Naive thymus-derived CD4-positive, alpha-beta T cell (primary cell): ENCODE measurements at regions of chr1 and their contacts with region 1.

Region 1: GRCh38 chr1:27725374-27726173 is at the start of gene FAM76A:
- DNase-seq: peak; percentile 97 to 100 (median 99)
- ATAC-seq: peak; percentile 97
- H3K4me3 ChIP-seq: peak within 1 kb of the TSS; percentile 77
- H3K4me3 Mint-ChIP-seq: peak within 1 kb of the TSS; percentile 86 to 93 (median 90)
- H3K27ac ChIP-seq: peak within 1 kb of the TSS; percentile 91
- H3K27ac Mint-ChIP-seq: peak within 1 kb of the TSS; percentile 93 to 100 (median 98)
- H3K4me1 ChIP-seq: peaks cover 7 to 17% of the 10 kb centered on the region in 2 donors
- H3K4me1 Mint-ChIP-seq: peaks cover 9 to 35% (median 28%) of the 10 kb centered on the region in 7 donors
- H3K27me3 ChIP-seq: no peaks in the 10 kb centered on the region
- H3K27me3 Mint-ChIP-seq: no peaks in the 10 kb centered on the region
- total RNA-seq, gene FAM76A: 15.2 to 25.2 (median 22.2) TPM

Region 2: DNA sequence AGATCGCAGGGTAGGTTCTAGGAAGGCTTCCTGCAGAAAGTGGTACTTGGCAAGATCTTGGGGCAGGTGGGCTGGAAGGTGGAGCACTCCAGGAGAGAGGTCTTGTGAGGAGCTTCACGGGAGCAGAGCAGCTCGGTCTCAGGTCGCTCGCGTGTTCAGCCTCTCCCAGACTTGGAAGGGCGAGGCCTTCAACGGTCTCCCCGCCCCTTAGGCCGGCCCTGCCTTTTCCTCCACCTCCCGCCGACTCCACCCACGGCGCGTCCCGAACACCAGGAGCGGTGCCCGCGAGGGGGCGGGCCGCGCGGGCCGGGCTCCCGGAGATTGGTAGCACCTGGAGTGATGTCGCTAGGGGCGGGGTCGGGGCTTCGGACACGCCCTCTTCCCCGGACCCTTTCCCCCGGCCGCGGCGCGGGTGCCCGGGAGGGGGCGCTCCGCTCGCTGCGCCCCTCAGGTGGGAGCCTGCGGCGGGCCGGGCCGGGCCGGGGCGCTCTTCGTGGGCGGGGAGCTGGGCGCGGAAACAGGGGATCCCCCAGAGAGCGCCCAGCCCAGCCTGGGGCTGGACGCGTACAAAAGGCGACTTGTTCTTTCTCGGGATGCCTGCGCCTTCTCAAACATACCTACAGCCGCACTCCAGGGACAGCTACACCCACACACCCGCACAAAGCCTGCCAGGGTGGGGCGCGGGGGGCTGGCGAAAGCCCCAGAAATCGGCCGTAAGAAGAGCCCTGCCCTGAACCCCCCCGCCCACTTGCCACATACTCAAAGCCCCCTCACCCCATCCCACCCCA is 157.1 kb before region 1 on chr1:
- CTCF ChIA-PET with region 1: no interaction called
- POLR2A ChIA-PET with region 1: no interaction called
- intact Hi-C with region 1: loop called in 1 of 2 experiments (anchors 2 kb)
- DNase-seq: peak; percentile 87 to 96 (median 91)
- ATAC-seq: peak; percentile 96
- H3K4me3 ChIP-seq: peak overlapping the region; percentile 51
- H3K4me3 Mint-ChIP-seq: peak overlapping the region; percentile 55 to 88 (median 78)
- H3K27ac ChIP-seq: peak overlapping the region; percentile 68
- H3K27ac Mint-ChIP-seq: peak overlapping the region; percentile 64 to 93 (median 83)
- H3K4me1 ChIP-seq: peaks cover 7 to 19% of the 10 kb centered on the region in 2 donors
- H3K4me1 Mint-ChIP-seq: peaks cover 15 to 57% (median 51%) of the 10 kb centered on the region in 7 donors
- H3K27me3 ChIP-seq: no peaks in the 10 kb centered on the region
- H3K27me3 Mint-ChIP-seq: no peaks in the 10 kb centered on the region

Region 3: GRCh38 chr1:27772933-27773825 is 47.6 kb after region 1 on chr1 and contains the start of gene STX12:
- CTCF ChIA-PET with region 1: interaction called, 3 read pairs
- POLR2A ChIA-PET with region 1: interaction called, 13 read pairs
- intact Hi-C with region 1: loop called (anchors 1 kb)
- DNase-seq: peak; percentile 97 to 100 (median 98)
- ATAC-seq: peak; percentile 96
- H3K4me3 ChIP-seq: peak within 1 kb of the TSS; percentile 97
- H3K4me3 Mint-ChIP-seq: peak within 1 kb of the TSS; percentile 84 to 97 (median 94)
- H3K27ac ChIP-seq: peak within 1 kb of the TSS; percentile 94
- H3K27ac Mint-ChIP-seq: peak within 1 kb of the TSS; percentile 90 to 99 (median 96)
- H3K4me1 ChIP-seq: peaks cover 10 to 13% of the 10 kb centered on the region in 2 donors
- H3K4me1 Mint-ChIP-seq: peaks cover 26 to 43% (median 37%) of the 10 kb centered on the region in 7 donors
- H3K27me3 ChIP-seq: no peaks in the 10 kb centered on the region
- H3K27me3 Mint-ChIP-seq: no peaks in the 10 kb centered on the region
- total RNA-seq, gene STX12: 23.9 to 38.7 (median 28.9) TPM

Region 4: DNA sequence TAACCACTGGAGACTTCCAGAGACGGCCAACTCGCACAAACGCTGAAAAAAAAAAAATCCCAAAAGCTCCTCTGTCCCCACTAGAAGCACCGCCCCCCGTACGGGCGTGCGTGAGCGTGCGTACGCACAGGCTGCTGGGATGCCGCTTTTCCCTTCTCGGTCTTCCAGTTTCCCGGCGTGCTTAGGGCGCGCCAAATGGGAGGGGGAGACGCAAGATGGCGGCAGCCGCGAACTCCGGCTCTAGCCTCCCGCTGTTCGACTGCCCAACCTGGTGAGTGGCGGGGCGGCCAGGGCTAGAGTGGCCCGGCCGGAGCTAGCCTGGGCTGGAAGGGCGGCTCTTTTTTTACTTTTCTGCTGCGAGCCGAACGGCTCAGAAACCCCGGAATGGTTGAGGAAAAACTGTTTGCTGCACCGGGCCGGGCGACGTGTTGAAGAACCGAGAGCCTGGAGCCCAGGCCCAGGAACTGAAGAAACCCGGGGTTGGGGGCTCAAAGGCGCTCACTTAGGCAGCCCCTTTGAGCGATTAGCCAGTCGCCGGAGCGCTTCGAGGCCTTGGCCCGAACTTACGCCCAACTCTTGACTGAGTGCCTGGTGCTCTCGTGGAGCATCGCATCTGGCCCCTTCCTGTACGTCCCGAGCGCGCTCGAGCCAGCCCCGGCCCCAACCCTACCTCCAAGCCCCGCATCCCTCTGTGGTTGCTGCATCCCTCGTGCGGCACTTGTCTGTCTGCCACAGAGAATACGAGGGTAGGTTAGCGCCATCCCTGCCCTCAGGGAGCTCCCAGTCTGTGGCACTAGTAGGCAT is 105.2 kb after region 1 on chr1 and contains the start of gene PPP1R8:
- CTCF ChIA-PET with region 1: no interaction called
- POLR2A ChIA-PET with region 1: interaction called, 3 read pairs
- intact Hi-C with region 1: loop called (anchors 1 kb)
- DNase-seq: peak; percentile 57 to 89 (median 86)
- ATAC-seq: peak; percentile 100
- H3K4me3 ChIP-seq: peak within 1 kb of the TSS; percentile 71
- H3K4me3 Mint-ChIP-seq: peak within 1 kb of the TSS; percentile 90 to 96 (median 93)
- H3K27ac ChIP-seq: peak within 1 kb of the TSS; percentile 92
- H3K27ac Mint-ChIP-seq: peak within 1 kb of the TSS; percentile 86 to 96 (median 92)
- H3K4me1 ChIP-seq: peaks cover 16% of the 10 kb centered on the region in 2 donors
- H3K4me1 Mint-ChIP-seq: peaks cover 16 to 51% (median 38%) of the 10 kb centered on the region in 7 donors
- H3K27me3 ChIP-seq: no peaks in the 10 kb centered on the region
- H3K27me3 Mint-ChIP-seq: no peaks in the 10 kb centered on the region
- total RNA-seq, gene PPP1R8: 17.5 to 60.2 (median 39.5) TPM